Endothelial cell of umbilical vein (primary cell): ENCODE measurements at regions of chr7 and their contacts with region 1.

Region 1: DNA sequence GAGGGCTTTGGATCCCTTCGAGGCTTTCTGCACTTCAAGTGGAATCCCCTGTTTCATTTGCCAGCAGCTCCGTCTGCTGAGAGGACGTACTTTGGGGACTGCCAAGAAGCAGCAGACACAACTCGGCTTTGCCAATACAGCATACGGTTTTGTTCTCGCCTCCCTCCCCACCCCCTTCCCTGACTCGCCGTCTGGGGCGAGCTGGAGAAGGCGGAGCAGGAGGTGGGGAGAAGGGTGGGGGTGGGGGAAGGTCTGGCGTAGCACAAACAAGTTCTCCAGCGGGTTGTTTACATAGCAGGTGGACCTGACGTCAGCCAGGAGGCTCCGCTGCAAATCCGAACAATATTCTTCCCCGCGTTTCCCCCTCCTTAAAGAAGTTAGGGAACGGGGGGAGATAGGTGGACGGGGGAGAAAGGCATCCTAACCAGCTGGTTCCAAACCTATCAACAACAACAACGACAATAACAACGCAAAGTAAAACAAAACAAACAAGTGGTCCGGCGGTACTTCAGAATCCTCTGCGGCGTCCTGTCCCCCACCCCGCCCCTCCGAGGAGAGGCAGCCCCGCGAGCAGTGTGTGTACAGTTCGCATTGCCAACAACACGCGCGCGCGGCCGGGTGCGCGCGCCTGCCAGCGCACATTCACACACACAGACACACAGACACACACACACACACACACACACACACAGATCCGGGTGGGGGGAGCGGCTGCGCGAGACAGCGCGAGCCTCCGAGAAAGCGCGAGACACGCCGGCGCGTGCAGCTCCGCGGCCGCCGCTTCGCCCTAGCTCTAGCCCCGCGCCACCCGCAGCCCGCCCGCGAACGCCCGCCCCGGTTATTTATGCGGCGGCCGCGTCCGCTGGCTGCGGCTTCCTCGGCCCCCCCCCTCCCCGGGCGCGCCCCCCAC is 167.0 kb upstream of the PPP1R3A start:
- DNase-seq: peak; percentile 65
- H3K4me3 ChIP-seq: peak overlapping the region; percentile 60 to 82 (median 81)
- H3K27ac ChIP-seq: no peak overlapping the region
- H3K4me1 ChIP-seq: peaks cover 33% of the 10 kb centered on the region
- H3K27me3 ChIP-seq: peaks cover 59 to 73% of the 10 kb centered on the region in 2 experiments
- CTCF ChIP-seq: no peak
- POLR2A ChIP-seq: no peak

Region 2: GRCh38 chr7:113774182-113774807 is 311.6 kb before region 1 on chr7:
- CTCF ChIA-PET with region 1: interaction called, 16 read pairs
- POLR2A ChIA-PET with region 1: no interaction called
- dilution Hi-C with region 1: no loop called
- intact Hi-C with region 1: loop called (anchors 5 kb)
- DNase-seq: peak; percentile 71
- H3K4me3 ChIP-seq: no peak overlapping the region
- H3K27ac ChIP-seq: no peak overlapping the region
- H3K4me1 ChIP-seq: no peaks in the 10 kb centered on the region
- H3K27me3 ChIP-seq: no peaks in the 10 kb centered on the region
- CTCF ChIP-seq: peak; percentile 42 to 45
- POLR2A ChIP-seq: no peak

Region 3: DNA sequence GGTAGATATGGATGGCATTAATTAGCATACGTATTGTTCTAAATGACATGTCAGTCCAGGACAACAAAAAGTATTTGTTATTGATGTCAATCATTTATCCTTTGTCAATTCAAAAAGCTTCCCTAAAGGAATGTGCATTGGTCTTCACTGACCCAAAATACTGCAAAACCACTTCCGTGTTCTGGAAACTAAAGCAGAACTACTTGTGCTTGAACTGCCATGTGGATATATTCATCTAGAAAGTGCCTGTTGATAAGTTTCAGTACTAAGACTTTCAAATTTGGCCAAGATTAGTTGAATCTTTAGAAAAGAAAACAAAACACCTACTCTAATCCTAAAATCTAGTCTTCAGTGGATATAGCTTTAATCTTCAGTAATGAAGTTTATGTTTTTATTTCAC is 75.1 kb after region 1 on chr7:
- CTCF ChIA-PET with region 1: no interaction called
- POLR2A ChIA-PET with region 1: no interaction called
- dilution Hi-C with region 1: no loop called
- intact Hi-C with region 1: no loop called
- DNase-seq: no peak
- H3K4me3 ChIP-seq: no peak overlapping the region
- H3K27ac ChIP-seq: no peak overlapping the region
- H3K4me1 ChIP-seq: no peaks in the 10 kb centered on the region
- H3K27me3 ChIP-seq: no peaks in the 10 kb centered on the region
- CTCF ChIP-seq: no peak
- POLR2A ChIP-seq: no peak

Region 4: DNA sequence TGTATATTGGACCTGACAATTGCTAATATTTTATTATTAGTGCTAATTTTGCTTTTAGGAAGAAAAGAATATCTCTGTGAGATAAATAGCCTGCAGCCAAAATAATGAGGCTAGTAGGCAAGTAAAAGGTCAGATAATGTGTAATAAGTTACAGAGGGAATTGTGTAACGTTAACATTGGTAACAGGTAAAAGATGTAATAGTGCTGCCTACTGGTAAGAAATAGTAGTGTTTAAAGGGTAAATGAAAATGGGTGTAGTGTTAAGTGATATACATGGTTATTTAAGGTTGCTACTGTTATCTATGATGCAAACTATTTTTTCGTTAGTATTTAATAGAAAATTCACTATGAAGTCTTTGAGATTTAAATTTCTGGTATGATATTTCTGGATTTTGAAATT is 319.6 kb after region 1 on chr7:
- CTCF ChIA-PET with region 1: interaction called, 32 read pairs
- POLR2A ChIA-PET with region 1: no interaction called
- dilution Hi-C with region 1: no loop called
- intact Hi-C with region 1: loop called (anchors 1 kb)
- DNase-seq: no peak
- H3K4me3 ChIP-seq: no peak overlapping the region
- H3K27ac ChIP-seq: no peak overlapping the region
- H3K4me1 ChIP-seq: no peaks in the 10 kb centered on the region
- H3K27me3 ChIP-seq: no peaks in the 10 kb centered on the region
- CTCF ChIP-seq: peak in 1 of 2 donors; percentile 3
- POLR2A ChIP-seq: no peak

Region 5: GRCh38 chr7:114663502-114663901 is 577.7 kb after region 1 on chr7:
- CTCF ChIA-PET with region 1: interaction called, 76 read pairs
- POLR2A ChIA-PET with region 1: no interaction called
- dilution Hi-C with region 1: no loop called
- intact Hi-C with region 1: loop called (anchors 1 kb)
- DNase-seq: peak; percentile 35
- H3K4me3 ChIP-seq: no peak overlapping the region
- H3K27ac ChIP-seq: no peak overlapping the region
- H3K4me1 ChIP-seq: no peaks in the 10 kb centered on the region
- H3K27me3 ChIP-seq: no peaks in the 10 kb centered on the region
- CTCF ChIP-seq: peak in 1 of 2 donors; percentile 30
- POLR2A ChIP-seq: no peak

Region 6: DNA sequence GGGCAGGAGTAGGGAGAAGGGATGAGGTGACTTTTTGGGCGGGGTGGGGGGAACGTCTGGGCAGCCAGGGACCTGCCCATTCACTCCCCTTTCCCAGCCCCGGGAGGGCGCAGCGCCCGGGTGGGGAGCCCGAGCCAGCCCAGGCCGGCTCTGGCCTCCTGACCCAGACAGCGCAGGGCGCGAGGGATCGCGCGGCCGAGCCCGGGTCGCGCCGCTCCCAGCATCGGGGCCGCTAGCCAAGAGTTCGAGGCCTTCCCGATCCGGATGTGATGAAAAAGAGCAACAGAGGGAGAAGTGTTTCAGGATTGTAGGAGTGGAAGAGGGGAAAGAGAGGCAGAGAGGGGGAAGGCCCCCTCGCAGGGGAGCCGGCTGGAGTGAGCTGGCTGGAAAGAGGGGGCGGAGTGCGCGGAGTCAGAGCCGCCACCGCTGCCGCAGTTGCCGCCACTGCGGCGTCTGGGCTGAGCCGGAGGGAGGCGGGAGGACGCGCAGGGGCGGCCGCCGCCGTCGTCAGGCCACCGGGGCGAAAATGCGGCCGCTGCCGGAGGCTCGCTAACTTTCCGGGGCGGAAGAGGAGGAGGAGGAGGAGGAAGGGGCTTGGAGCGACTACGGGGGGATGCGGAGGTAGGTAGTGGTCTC is 836.3 kb after region 1 on chr7 and contains the start of gene MDFIC:
- CTCF ChIA-PET with region 1: interaction called, 5 read pairs
- POLR2A ChIA-PET with region 1: no interaction called
- dilution Hi-C with region 1: no loop called
- intact Hi-C with region 1: loop called (anchors 5 kb)
- DNase-seq: peak; percentile 47
- H3K4me3 ChIP-seq: peak within 1 kb of the TSS; percentile 60 to 96 (median 73)
- H3K27ac ChIP-seq: peak within 1 kb of the TSS; percentile 58
- H3K4me1 ChIP-seq: peaks cover 3% of the 10 kb centered on the region
- H3K27me3 ChIP-seq: peaks cover 0 to 2% of the 10 kb centered on the region in 2 experiments
- CTCF ChIP-seq: no peak
- POLR2A ChIP-seq: peak; percentile 62
- total RNA-seq, gene MDFIC: 13.7 and 14.2 TPM in 2 replicates

Region 7: DNA sequence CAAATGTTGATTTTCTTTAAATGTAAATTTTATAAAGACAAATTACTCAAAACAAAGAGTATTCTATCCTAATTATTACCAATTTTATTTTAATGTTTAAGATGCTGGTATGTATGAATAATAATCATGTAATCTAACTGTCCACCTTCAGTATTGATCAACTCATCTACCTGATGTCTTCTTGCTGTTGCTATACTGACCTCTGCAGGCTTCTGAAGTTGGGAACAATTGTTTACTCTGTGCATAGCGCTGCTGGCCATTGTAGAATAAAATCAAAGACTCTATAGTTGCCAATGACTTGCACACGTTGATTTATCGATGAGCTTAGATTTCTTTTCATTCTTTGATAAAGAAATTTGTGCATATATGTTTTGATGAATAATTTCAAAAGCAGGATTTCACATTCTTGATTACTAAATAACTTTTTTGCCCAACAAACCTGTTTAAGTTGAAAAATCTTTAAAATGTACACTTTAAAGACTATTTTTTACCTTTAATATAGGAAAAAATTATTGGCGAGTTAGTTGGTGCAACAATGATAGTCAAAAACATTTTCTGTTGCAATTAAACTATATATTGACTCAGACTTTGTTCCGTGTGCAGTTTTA is 1662.4 kb after region 1 on chr7:
- CTCF ChIA-PET with region 1: interaction called, 3 read pairs
- POLR2A ChIA-PET with region 1: no interaction called
- dilution Hi-C with region 1: no loop called
- intact Hi-C with region 1: loop called (anchors 2 kb)
- DNase-seq: no peak
- H3K4me3 ChIP-seq: no peak overlapping the region
- H3K27ac ChIP-seq: no peak overlapping the region
- H3K4me1 ChIP-seq: no peaks in the 10 kb centered on the region
- H3K27me3 ChIP-seq: no peaks in the 10 kb centered on the region
- CTCF ChIP-seq: no peak
- POLR2A ChIP-seq: no peak